ENCODE measurements at regions of chr17 and their contacts with region 1.

Region 1: DNA sequence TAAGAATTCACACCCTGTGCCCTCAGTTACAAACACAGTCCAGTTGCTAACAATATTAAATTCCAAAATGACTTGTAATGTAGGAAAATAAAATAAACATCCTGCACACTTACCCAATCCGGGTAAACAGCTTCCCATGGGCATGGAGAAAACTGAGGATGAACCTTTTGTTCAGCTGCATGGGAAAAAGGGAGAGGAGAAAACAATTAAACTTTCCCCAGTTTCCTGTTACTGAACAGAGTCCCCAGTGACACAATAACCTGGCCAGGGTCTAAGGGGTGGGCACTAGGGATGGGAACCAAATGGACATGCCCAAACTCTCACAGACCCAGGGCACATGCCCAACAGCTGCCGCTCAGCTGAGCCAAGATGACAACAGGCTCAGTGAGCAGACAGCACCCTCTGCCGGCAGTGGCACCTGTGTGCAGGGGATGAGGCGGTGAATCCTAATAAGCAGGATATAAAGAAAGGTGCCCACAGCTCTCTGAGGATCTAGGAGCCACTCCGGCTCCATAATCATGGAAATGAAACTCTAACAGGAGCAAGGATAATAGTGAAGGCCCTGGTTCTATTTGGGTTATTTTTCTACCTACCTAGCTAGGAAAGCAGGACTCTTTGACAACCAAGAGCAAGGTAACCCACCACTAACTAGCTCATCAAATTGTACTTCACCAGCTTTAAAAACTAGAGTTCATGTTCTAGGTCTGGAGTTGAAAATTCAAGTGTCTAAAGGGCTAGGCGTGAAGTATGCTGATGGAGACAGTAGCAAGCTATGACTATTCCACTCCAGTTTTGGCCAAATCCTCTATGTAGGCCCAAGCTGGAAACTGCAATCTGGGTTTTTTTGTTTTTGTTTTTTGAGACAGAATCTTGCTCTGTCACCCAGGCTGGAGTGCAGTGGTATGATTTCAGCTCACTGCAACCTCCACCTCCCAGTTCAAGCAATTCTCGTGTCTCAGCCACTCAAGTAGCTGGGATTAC is 58.8 kb downstream of the SMG6 start:
- DNase-seq: peak; percentile 73 to 79 (median 76)
- H3K4me3 ChIP-seq: no peak overlapping the region
- H3K4me3 Mint-ChIP-seq: no peak overlapping the region
- H3K27ac ChIP-seq: no peak overlapping the region
- H3K27ac Mint-ChIP-seq: peak overlapping the region; percentile 48 to 93 (median 82)
- H3K4me1 ChIP-seq: no peaks in the 10 kb centered on the region
- H3K4me1 Mint-ChIP-seq: peaks cover 15 to 38% (median 23%) of the 10 kb centered on the region in 4 donors
- H3K27me3 ChIP-seq: no peaks in the 10 kb centered on the region
- H3K27me3 Mint-ChIP-seq: no peaks in the 10 kb centered on the region

Region 2: GRCh38 chr17:1908699-1909309 is 336.0 kb before region 1 on chr17:
- CTCF ChIA-PET with region 1: interaction called, 4 read pairs
- POLR2A ChIA-PET with region 1: interaction called, 4 read pairs
- intact Hi-C with region 1: loop called (anchors 1 kb)
- DNase-seq: peak in 4 of 5 donors; percentile 12 to 22 (median 18)
- H3K4me3 ChIP-seq: no peak overlapping the region
- H3K4me3 Mint-ChIP-seq: peak overlapping the region; percentile 26 to 65 (median 51)
- H3K27ac ChIP-seq: no peak overlapping the region
- H3K27ac Mint-ChIP-seq: no peak overlapping the region
- H3K4me1 ChIP-seq: peaks cover 14% of the 10 kb centered on the region
- H3K4me1 Mint-ChIP-seq: peaks cover 5 to 12% (median 8%) of the 10 kb centered on the region in 4 donors
- H3K27me3 ChIP-seq: peaks cover 20% of the 10 kb centered on the region
- H3K27me3 Mint-ChIP-seq: peaks cover 34 to 41% of the 10 kb centered on the region in 2 donors

Region 3: DNA sequence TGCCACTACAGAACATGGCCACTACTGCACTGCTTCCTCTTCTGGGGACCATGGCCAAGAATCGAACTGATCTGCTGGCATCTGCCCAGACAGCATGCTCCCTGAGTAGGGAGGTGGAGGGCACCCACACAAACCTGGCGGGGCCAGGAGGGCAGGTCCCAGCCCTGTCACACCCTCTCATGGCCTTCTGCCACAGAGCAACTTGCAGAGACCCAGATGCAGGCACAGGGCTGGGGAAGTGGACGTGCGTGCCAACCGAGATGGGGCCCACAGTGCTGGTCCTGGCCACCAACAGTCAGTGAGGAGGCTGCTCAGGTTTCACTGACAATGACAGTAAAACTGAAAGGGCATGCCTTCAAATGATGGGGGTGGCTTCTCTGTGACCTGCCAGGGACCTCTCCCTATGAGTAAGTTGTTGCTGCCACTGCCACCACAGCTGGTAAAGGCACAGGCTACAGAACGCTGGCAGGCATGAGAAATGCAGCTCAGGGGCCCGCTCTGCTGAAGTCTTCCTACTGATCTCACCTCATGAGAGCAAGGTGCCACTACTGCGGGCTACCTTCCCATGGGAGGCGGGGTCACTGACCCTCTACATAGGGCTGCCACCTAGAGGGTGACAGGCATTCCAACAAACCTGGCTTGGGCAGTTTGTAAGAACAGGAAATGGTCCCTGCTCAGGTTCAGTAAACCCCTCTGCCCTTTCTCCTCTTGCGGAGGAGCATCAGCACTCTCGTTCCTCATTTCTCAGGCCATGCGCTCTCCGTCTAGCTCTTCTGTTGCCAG is 174.4 kb before region 1 on chr17:
- CTCF ChIA-PET with region 1: interaction called, 15 read pairs
- POLR2A ChIA-PET with region 1: interaction called, 3 read pairs
- intact Hi-C with region 1: no loop called
- DNase-seq: no peak
- H3K4me3 ChIP-seq: no peak overlapping the region
- H3K4me3 Mint-ChIP-seq: no peak overlapping the region
- H3K27ac ChIP-seq: no peak overlapping the region
- H3K27ac Mint-ChIP-seq: peak overlapping the region in 5 of 7 donors; percentile 42 to 86 (median 72)
- H3K4me1 ChIP-seq: peaks cover 21% of the 10 kb centered on the region
- H3K4me1 Mint-ChIP-seq: peaks cover 9 to 25% (median 18%) of the 10 kb centered on the region in 4 donors
- H3K27me3 ChIP-seq: no peaks in the 10 kb centered on the region
- H3K27me3 Mint-ChIP-seq: no peaks in the 10 kb centered on the region

Region 4: DNA sequence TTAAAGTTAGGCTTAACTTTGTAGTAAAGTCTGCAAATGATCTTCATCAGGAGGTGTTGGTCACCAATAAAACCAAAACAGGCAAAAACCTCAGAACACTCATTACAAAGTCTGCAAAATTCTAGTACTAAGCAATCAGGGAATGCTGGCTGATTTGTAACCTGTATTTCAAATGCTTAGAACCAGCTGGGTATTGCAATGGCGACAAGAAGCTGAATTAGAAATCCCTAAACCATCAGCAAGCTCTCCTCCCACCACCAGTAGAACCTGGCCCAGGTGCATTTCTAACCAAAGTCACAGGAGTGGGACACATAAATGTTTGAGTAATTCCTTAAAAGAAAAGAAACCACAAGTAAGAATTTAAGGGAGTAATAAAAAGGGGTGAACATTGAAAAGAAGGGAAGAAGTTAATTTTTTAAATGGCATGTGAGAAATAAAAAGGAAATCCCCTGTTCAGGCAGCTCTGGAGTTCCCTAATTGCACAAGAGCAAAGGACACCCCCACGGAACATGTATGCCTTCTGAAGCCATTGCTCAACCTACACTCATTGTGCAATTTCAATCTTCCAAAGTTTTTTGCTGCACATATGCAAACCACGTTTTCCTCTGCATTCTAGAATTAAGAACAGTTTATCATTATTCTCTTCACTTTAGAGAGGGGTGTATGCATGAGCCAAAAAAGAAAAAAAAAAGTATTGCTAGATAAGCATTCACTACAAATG is 87.0 kb before region 1 on chr17:
- CTCF ChIA-PET with region 1: interaction called, 12 read pairs
- POLR2A ChIA-PET with region 1: no interaction called
- intact Hi-C with region 1: no loop called
- DNase-seq: no peak
- H3K4me3 ChIP-seq: no peak overlapping the region
- H3K4me3 Mint-ChIP-seq: no peak overlapping the region
- H3K27ac ChIP-seq: no peak overlapping the region
- H3K27ac Mint-ChIP-seq: peak overlapping the region in 2 of 7 donors; percentile 22 to 32
- H3K4me1 ChIP-seq: no peaks in the 10 kb centered on the region
- H3K4me1 Mint-ChIP-seq: peaks cover 0 to 1% (median 0%) of the 10 kb centered on the region in 4 donors
- H3K27me3 ChIP-seq: no peaks in the 10 kb centered on the region
- H3K27me3 Mint-ChIP-seq: no peaks in the 10 kb centered on the region

Region 5: DNA sequence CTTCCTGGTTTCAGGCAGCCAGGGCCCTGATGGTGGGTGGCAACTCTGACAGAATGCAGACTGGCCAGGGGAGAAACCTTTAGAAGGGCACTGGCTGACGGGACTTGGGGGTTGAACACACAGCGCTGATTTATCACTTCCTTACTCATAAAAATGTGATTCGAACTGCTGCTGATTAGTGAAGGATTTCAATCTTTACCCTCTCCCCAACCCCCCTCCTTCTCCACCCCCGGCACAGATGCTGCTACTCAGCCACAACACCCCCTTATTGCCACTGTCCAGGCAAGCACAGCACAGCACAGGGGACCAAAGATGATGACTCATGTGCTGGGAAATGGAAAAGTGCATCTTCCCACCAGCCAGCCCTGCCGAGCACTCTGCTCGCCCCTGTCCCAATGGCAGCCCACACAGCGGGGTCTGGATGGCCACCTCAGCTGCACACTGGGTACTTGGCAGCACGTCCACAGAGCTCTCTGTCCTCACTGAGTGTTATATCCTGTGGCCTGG is 11.3 kb before region 1 on chr17:
- CTCF ChIA-PET with region 1: interaction called, 20 read pairs
- POLR2A ChIA-PET with region 1: no interaction called
- intact Hi-C with region 1: no loop called
- DNase-seq: no peak
- H3K4me3 ChIP-seq: no peak overlapping the region
- H3K4me3 Mint-ChIP-seq: no peak overlapping the region
- H3K27ac ChIP-seq: no peak overlapping the region
- H3K27ac Mint-ChIP-seq: peak overlapping the region in 3 of 7 donors; percentile 1 to 38 (median 11)
- H3K4me1 ChIP-seq: no peaks in the 10 kb centered on the region
- H3K4me1 Mint-ChIP-seq: peaks cover 6 to 20% (median 13%) of the 10 kb centered on the region in 4 donors
- H3K27me3 ChIP-seq: no peaks in the 10 kb centered on the region
- H3K27me3 Mint-ChIP-seq: no peaks in the 10 kb centered on the region

Region 6: DNA sequence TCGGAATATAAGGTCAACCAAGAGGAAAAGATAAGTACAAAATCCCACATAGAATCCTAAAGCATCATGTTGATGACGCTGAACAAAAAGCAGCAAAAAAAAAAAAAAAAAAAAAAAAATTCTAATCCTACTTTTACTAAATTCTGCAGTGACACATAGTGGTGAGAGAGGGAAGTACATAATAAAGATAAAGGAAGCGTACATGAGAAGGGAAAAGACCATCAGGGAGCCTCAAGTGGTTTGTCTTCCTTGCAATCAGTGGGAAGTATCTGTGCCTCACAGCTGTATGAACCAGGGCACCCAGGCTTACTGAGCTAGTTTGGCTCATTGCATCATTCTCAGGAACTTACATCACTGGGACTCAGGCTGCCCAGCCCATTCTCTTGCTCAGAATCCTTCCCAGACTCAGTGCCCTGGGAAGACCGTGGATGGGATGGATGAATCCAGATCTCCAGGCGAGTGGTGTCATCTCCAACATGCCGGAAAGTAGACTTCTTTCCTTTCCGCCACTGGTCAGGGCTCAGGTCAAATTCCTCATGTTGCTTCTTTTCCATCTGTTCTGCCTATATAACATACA is 37.5 kb after region 1 on chr17:
- CTCF ChIA-PET with region 1: interaction called, 104 read pairs
- POLR2A ChIA-PET with region 1: interaction called, 6 read pairs
- intact Hi-C with region 1: loop called (anchors 1 kb)
- DNase-seq: peak in 4 of 5 donors; percentile 52 to 66 (median 58)
- H3K4me3 ChIP-seq: no peak overlapping the region
- H3K4me3 Mint-ChIP-seq: no peak overlapping the region
- H3K27ac ChIP-seq: no peak overlapping the region
- H3K27ac Mint-ChIP-seq: peak overlapping the region; percentile 8 to 88 (median 84)
- H3K4me1 ChIP-seq: peaks cover 8% of the 10 kb centered on the region
- H3K4me1 Mint-ChIP-seq: peaks cover 1 to 18% (median 15%) of the 10 kb centered on the region in 4 donors
- H3K27me3 ChIP-seq: no peaks in the 10 kb centered on the region
- H3K27me3 Mint-ChIP-seq: no peaks in the 10 kb centered on the region